ENCODE measurements at regions of chr16 and their contacts with region 1.

Region 1: GRCh38 chr16:4624015-4624826 is at the start of gene MGRN1:
- DNase-seq: peak; percentile 93 to 95 (median 94)
- H3K4me3 ChIP-seq: peak within 1 kb of the TSS; percentile 38 to 81
- H3K4me3 Mint-ChIP-seq: peak within 1 kb of the TSS; percentile 92 to 99 (median 95)
- H3K27ac ChIP-seq: peak within 1 kb of the TSS; percentile 94
- H3K27ac Mint-ChIP-seq: peak within 1 kb of the TSS; percentile 92 to 100 (median 99)
- H3K4me1 ChIP-seq: peaks cover 25% of the 10 kb centered on the region
- H3K4me1 Mint-ChIP-seq: peaks cover 20 to 46% (median 34%) of the 10 kb centered on the region in 4 donors
- H3K27me3 ChIP-seq: no peaks in the 10 kb centered on the region
- H3K27me3 Mint-ChIP-seq: no peaks in the 10 kb centered on the region
- total RNA-seq, gene MGRN1: 62.2 to 64.1 TPM

Region 2: GRCh38 chr16:4160658-4161430 is 463.4 kb before region 1 on chr16:
- CTCF ChIA-PET with region 1: no interaction called
- POLR2A ChIA-PET with region 1: no interaction called
- intact Hi-C with region 1: no loop called
- DNase-seq: peak in 1 of 5 donors; percentile 59
- H3K4me3 ChIP-seq: no peak overlapping the region
- H3K4me3 Mint-ChIP-seq: peak overlapping the region in 2 of 8 donors; percentile 1 to 43
- H3K27ac ChIP-seq: no peak overlapping the region
- H3K27ac Mint-ChIP-seq: peak overlapping the region in 3 of 7 donors; percentile 19 to 77 (median 26)
- H3K4me1 ChIP-seq: no peaks in the 10 kb centered on the region
- H3K4me1 Mint-ChIP-seq: no peaks in the 10 kb centered on the region
- H3K27me3 ChIP-seq: no peaks in the 10 kb centered on the region
- H3K27me3 Mint-ChIP-seq: no peaks in the 10 kb centered on the region

Region 3: DNA sequence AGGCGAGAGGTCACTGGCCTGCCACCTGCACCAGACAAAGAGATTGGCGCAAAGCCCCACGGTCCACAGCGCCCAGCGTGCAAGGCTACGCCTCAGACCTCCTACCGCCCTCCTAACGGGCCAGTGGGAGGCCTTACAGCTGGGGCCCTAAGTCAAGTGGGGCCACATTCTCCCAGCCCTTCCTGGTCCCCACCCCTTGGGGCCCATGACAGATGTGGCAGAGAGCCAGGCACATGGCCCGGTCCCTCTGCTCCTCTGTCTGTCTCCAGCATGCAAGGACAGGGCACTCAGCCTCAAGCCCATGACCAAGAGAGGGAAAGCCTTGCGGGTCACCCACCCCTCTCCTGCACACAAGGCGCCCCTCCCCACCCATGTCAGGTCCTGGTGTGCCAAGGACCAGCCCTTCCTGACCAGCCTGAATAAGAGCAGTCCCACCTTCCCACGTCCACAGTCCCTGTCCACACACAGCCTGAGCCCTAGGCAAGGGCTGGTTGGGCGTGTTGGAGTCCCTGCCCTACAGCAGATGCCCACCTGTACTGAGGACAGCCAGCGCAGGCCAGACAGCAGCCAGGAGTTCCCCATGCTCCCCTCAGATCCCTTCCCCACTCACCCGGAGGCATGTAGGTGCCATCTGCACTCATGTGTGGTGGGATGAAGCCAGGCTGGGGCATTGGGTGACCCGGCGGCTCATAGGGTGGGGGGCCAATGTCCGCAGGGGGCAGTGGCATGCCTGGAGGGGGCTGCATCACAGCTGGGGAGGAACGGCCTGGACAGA is 110.9 kb before region 1 on chr16:
- CTCF ChIA-PET with region 1: no interaction called
- POLR2A ChIA-PET with region 1: no interaction called
- intact Hi-C with region 1: no loop called
- DNase-seq: no peak
- H3K4me3 ChIP-seq: no peak overlapping the region
- H3K4me3 Mint-ChIP-seq: peak overlapping the region in 1 of 8 donors; percentile 30
- H3K27ac ChIP-seq: peak overlapping the region; percentile 50
- H3K27ac Mint-ChIP-seq: peak overlapping the region; percentile 46 to 94 (median 78)
- H3K4me1 ChIP-seq: peaks cover 42% of the 10 kb centered on the region
- H3K4me1 Mint-ChIP-seq: peaks cover 33 to 65% (median 46%) of the 10 kb centered on the region in 4 donors
- H3K27me3 ChIP-seq: no peaks in the 10 kb centered on the region
- H3K27me3 Mint-ChIP-seq: no peaks in the 10 kb centered on the region

Region 4: GRCh38 chr16:4637501-4638166 is 13.4 kb after region 1 on chr16:
- CTCF ChIA-PET with region 1: interaction called, 14 read pairs
- POLR2A ChIA-PET with region 1: interaction called, 11 read pairs
- intact Hi-C with region 1: no loop called
- DNase-seq: no peak
- H3K4me3 ChIP-seq: no peak overlapping the region
- H3K4me3 Mint-ChIP-seq: no peak overlapping the region
- H3K27ac ChIP-seq: no peak overlapping the region
- H3K27ac Mint-ChIP-seq: no peak overlapping the region
- H3K4me1 ChIP-seq: peaks cover 11% of the 10 kb centered on the region
- H3K4me1 Mint-ChIP-seq: peaks cover 8 to 32% (median 15%) of the 10 kb centered on the region in 4 donors
- H3K27me3 ChIP-seq: no peaks in the 10 kb centered on the region
- H3K27me3 Mint-ChIP-seq: no peaks in the 10 kb centered on the region

Region 5: GRCh38 chr16:4649744-4650442 is 25.7 kb after region 1 on chr16:
- CTCF ChIA-PET with region 1: interaction called, 13 read pairs
- POLR2A ChIA-PET with region 1: no interaction called
- intact Hi-C with region 1: no loop called
- DNase-seq: peak in 1 of 5 donors; percentile 9
- H3K4me3 ChIP-seq: no peak overlapping the region
- H3K4me3 Mint-ChIP-seq: peak overlapping the region in 1 of 8 donors; percentile 13
- H3K27ac ChIP-seq: no peak overlapping the region
- H3K27ac Mint-ChIP-seq: peak overlapping the region in 6 of 7 donors; percentile 67 to 91 (median 84)
- H3K4me1 ChIP-seq: peaks cover 22% of the 10 kb centered on the region
- H3K4me1 Mint-ChIP-seq: peaks cover 14 to 35% (median 19%) of the 10 kb centered on the region in 4 donors
- H3K27me3 ChIP-seq: no peaks in the 10 kb centered on the region
- H3K27me3 Mint-ChIP-seq: no peaks in the 10 kb centered on the region

Region 6: GRCh38 chr16:4675864-4676786 is 51.9 kb after region 1 on chr16:
- CTCF ChIA-PET with region 1: no interaction called
- POLR2A ChIA-PET with region 1: interaction called, 4 read pairs
- intact Hi-C with region 1: loop called (anchors 1 kb)
- DNase-seq: peak; percentile 72 to 83 (median 80)
- H3K4me3 ChIP-seq: no peak overlapping the region
- H3K4me3 Mint-ChIP-seq: peak overlapping the region; percentile 54 to 87 (median 76)
- H3K27ac ChIP-seq: peak overlapping the region; percentile 65
- H3K27ac Mint-ChIP-seq: peak overlapping the region; percentile 95 to 99 (median 98)
- H3K4me1 ChIP-seq: peaks cover 23% of the 10 kb centered on the region
- H3K4me1 Mint-ChIP-seq: peaks cover 15 to 29% (median 23%) of the 10 kb centered on the region in 4 donors
- H3K27me3 ChIP-seq: no peaks in the 10 kb centered on the region
- H3K27me3 Mint-ChIP-seq: no peaks in the 10 kb centered on the region

Region 7: DNA sequence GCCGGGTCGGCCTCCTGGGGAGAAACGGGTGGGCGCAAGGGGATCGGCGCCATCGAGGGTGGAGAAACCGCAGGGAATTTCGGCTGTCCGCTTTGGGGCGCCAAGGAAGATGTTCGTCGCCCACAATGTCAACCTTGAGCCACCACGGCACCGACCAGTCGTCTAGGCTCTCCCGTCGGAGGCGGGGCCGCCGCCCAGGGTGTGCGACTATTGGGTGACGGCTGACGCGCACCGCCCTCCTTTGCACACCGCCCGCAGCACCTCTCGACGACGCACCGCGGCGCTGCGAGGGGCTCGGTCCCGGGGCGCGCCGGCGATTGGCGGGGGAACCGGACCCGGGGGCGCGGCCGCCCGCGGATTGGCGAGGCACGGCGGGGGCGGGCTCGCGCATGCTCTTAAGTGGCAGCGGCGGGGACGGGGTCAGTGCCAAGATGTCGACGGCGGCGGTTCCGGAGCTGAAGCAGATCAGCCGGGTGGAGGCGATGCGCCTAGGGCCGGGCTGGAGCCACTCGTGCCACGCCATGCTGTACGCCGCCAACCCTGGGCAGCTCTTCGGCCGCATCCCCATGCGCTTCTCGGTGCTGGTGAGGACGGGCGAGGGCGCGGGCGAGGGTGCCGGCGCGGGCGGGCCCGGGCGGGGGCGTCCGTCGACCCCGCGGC is 69.2 kb after region 1 on chr16 and contains the start of gene NUDT16L1:
- CTCF ChIA-PET with region 1: interaction called, 4 read pairs
- POLR2A ChIA-PET with region 1: interaction called, 34 read pairs
- intact Hi-C with region 1: loop called (anchors 2 kb)
- DNase-seq: peak; percentile 94 to 99 (median 98)
- H3K4me3 ChIP-seq: peak within 1 kb of the TSS; percentile 61 to 81
- H3K4me3 Mint-ChIP-seq: peak within 1 kb of the TSS; percentile 85 to 92 (median 88)
- H3K27ac ChIP-seq: peak within 1 kb of the TSS; percentile 81
- H3K27ac Mint-ChIP-seq: peak within 1 kb of the TSS; percentile 84 to 93 (median 91)
- H3K4me1 ChIP-seq: peaks cover 21% of the 10 kb centered on the region
- H3K4me1 Mint-ChIP-seq: peaks cover 2 to 22% (median 9%) of the 10 kb centered on the region in 4 donors
- H3K27me3 ChIP-seq: no peaks in the 10 kb centered on the region
- H3K27me3 Mint-ChIP-seq: no peaks in the 10 kb centered on the region
- total RNA-seq, gene NUDT16L1: 52.4 to 53.7 TPM

Region 8: GRCh38 chr16:4766874-4767628 is 142.8 kb after region 1 on chr16 and contains the start of gene ZNF500:
- CTCF ChIA-PET with region 1: no interaction called
- POLR2A ChIA-PET with region 1: interaction called, 11 read pairs
- intact Hi-C with region 1: loop called (anchors 2 kb)
- DNase-seq: peak; percentile 90 to 93 (median 93)
- H3K4me3 ChIP-seq: peak within 1 kb of the TSS; percentile 94 to 96
- H3K4me3 Mint-ChIP-seq: peak within 1 kb of the TSS; percentile 92 to 95 (median 94)
- H3K27ac ChIP-seq: peak within 1 kb of the TSS; percentile 79
- H3K27ac Mint-ChIP-seq: peak within 1 kb of the TSS; percentile 89 to 98 (median 94)
- H3K4me1 ChIP-seq: peaks cover 32% of the 10 kb centered on the region
- H3K4me1 Mint-ChIP-seq: peaks cover 16 to 50% (median 35%) of the 10 kb centered on the region in 4 donors
- H3K27me3 ChIP-seq: no peaks in the 10 kb centered on the region
- H3K27me3 Mint-ChIP-seq: no peaks in the 10 kb centered on the region
- total RNA-seq, gene ZNF500: 33.9 to 35.6 TPM

Region 9: GRCh38 chr16:4846891-4847773 is 222.9 kb after region 1 on chr16 and contains the starts of genes GLYR1 and UBN1:
- CTCF ChIA-PET with region 1: no interaction called
- POLR2A ChIA-PET with region 1: no interaction called
- intact Hi-C with region 1: loop called (anchors 2 kb)
- DNase-seq: peak; percentile 99
- H3K4me3 ChIP-seq: peak within 1 kb of the TSS; percentile 74 to 78
- H3K4me3 Mint-ChIP-seq: peak within 1 kb of the TSS; percentile 89 to 93 (median 92)
- H3K27ac ChIP-seq: peak within 1 kb of the TSS; percentile 95
- H3K27ac Mint-ChIP-seq: peak within 1 kb of the TSS; percentile 90 to 96 (median 95)
- H3K4me1 ChIP-seq: peaks cover 55% of the 10 kb centered on the region
- H3K4me1 Mint-ChIP-seq: peaks cover 42 to 65% (median 53%) of the 10 kb centered on the region in 4 donors
- H3K27me3 ChIP-seq: no peaks in the 10 kb centered on the region
- H3K27me3 Mint-ChIP-seq: no peaks in the 10 kb centered on the region
- total RNA-seq, gene GLYR1: 117 to 121 TPM
- total RNA-seq, gene UBN1: 40.4 to 42.7 TPM

Measured in CD4-positive, alpha-beta memory T cell (primary cell).